Activated CD4-positive, alpha-beta T cell treated with anti-CD3 and anti-CD28 coated beads for 36 hours (primary cell): ENCODE measurements at regions of chr20 and their contacts with region 1.

Region 1: DNA sequence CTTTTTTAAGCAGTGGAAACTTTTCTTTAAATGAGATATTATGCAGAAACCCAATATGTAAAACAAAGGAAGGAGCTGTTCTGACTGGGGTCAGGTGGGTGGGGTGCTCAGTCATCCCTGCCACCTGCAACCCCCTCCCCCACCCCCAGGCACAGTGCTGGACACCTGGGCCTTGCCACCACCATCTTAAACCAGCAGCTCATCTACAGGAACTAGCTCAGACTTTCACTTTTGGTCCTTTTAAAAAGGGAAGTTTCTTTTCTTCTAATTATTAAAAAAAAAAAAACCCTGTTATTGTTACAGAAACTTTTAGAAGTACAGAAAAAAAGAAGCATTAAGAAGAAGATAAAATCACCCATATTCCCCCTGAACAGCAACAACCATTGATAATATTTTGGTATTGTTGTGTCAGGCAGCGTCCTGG is 37.1 kb downstream of the PPP1R16B start:
- DNase-seq: peak; percentile 87
- ATAC-seq: peak; percentile 66
- H3K4me3 Mint-ChIP-seq: peak overlapping the region; percentile 71
- H3K27ac Mint-ChIP-seq: peak overlapping the region; percentile 97
- H3K4me1 Mint-ChIP-seq: peaks cover 87% of the 10 kb centered on the region
- H3K27me3 Mint-ChIP-seq: no peaks in the 10 kb centered on the region

Region 2: GRCh38 chr20:38805502-38805957 is 37.0 kb before region 1 on chr20 and contains the start of gene PPP1R16B:
- CTCF ChIA-PET with region 1: interaction called, 10 read pairs
- POLR2A ChIA-PET with region 1: interaction called, 9 read pairs
- intact Hi-C with region 1: loop called (anchors 1 to 2 kb)
- DNase-seq: peak; percentile 86
- ATAC-seq: peak; percentile 79
- H3K4me3 Mint-ChIP-seq: peak within 1 kb of the TSS; percentile 86
- H3K27ac Mint-ChIP-seq: peak within 1 kb of the TSS; percentile 93
- H3K4me1 Mint-ChIP-seq: peaks cover 46% of the 10 kb centered on the region
- H3K27me3 Mint-ChIP-seq: no peaks in the 10 kb centered on the region
- total RNA-seq, gene PPP1R16B: 78.8 to 84.0 TPM

Region 3: DNA sequence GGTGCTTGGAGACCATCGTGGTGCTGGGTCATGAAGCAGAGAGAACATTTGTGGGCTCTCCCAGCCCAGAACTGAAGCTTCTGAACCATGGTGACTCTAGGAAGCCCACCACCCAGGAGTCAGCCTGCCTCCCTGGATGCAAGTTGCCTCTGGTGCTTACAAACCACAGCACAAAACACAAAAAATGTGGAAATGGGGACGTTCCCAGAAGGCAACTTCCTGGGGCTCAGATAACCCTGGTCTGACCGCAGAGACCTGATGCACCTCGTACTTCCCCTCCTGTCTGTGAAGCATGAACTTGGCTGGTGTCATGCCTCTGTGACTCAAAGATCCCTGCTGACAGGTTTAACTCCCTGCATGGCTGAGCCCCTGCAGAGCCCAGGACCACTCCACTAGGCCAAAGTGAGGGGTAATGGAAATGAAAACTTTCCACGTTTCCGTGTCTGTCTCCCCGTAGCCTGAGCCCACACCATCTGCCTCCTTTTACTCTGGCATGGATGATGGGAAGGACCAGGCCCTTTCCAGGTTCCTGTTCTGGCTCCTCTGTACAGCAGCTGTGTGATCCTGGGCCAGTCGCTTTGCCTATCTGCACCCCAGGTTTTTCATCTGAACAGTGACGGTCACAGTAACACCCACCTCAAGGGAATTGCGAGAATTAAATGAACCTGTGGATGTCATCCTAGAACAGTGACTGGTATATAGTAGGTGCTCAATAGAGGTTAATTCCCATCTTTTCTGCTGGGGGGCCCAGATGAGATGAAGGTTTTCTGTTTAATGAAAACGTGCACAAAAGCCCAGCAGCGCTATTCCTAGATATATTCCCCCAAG is 20.7 kb after region 1 on chr20:
- CTCF ChIA-PET with region 1: interaction called, 11 read pairs
- POLR2A ChIA-PET with region 1: no interaction called
- intact Hi-C with region 1: no loop called
- DNase-seq: peak; percentile 79
- ATAC-seq: peak; percentile 91
- H3K4me3 Mint-ChIP-seq: peak overlapping the region; percentile 3
- H3K27ac Mint-ChIP-seq: peak overlapping the region; percentile 77
- H3K4me1 Mint-ChIP-seq: peaks cover 56% of the 10 kb centered on the region
- H3K27me3 Mint-ChIP-seq: no peaks in the 10 kb centered on the region

Region 4: GRCh38 chr20:39019805-39020325 is 177.3 kb after region 1 on chr20:
- CTCF ChIA-PET with region 1: no interaction called
- POLR2A ChIA-PET with region 1: no interaction called
- intact Hi-C with region 1: loop called in 1 of 2 experiments (anchors 5 kb)
- DNase-seq: peak; percentile 74
- ATAC-seq: peak; percentile 89
- H3K4me3 Mint-ChIP-seq: no peak overlapping the region
- H3K27ac Mint-ChIP-seq: peak overlapping the region; percentile 55
- H3K4me1 Mint-ChIP-seq: peaks cover 57% of the 10 kb centered on the region
- H3K27me3 Mint-ChIP-seq: no peaks in the 10 kb centered on the region